T-cell (primary cell): ENCODE measurements at regions of chr9 and their contacts with region 1.

Region 1: DNA sequence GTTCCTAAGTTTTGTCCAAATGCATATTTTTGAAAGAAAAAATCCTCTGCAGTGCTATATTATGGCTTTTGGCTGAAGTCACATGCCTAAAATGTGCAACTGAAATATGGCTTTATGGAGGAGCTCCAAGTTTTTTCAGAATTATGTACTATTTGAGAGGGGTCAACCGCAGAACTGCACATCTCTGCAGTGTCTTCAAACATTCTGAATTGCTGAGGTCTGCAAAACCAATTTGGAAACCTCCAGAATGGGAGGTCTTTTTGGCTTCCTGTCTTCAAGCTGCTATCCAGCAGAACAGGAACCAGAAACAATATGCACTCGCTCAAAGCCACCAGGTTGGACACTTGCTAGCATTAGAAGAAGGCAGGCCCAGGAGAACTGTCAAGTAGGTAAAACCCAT is 376.0 kb upstream of the PAPPA start:
- DNase-seq: no peak
- ATAC-seq: no peak
- H3K4me3 ChIP-seq: no peak overlapping the region
- H3K4me3 Mint-ChIP-seq: no peak overlapping the region
- H3K27ac ChIP-seq: no peak overlapping the region
- H3K27ac Mint-ChIP-seq: no peak overlapping the region
- H3K4me1 ChIP-seq: no peaks in the 10 kb centered on the region
- H3K4me1 Mint-ChIP-seq: no peaks in the 10 kb centered on the region
- H3K27me3 ChIP-seq: no peaks in the 10 kb centered on the region
- H3K27me3 Mint-ChIP-seq: no peaks in the 10 kb centered on the region

Region 2: DNA sequence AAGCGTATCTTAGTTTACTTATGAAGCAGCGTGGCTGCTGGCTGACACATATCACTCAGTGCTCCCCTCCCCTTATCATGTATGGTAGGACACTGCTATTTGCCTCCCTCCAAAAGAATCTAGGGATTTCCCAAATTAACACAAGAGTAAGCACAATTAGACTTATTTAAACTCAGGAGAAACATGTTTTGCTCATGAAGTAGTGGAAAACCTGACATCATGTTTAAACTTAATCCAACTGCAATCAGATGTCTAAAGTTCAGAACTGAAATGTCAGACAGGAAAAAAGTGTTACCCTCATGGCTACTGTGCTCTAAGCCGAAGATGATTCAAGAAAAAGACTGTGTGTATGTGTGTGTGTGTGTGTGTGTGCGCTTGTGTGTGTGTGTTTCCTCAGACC is 335.6 kb before region 1 on chr9:
- CTCF ChIA-PET with region 1: no interaction called
- POLR2A ChIA-PET with region 1: interaction called in 1 of 2 experiments, 11 read pairs
- DNase-seq: no peak
- ATAC-seq: no peak
- H3K4me3 ChIP-seq: no peak overlapping the region
- H3K4me3 Mint-ChIP-seq: no peak overlapping the region
- H3K27ac ChIP-seq: no peak overlapping the region
- H3K27ac Mint-ChIP-seq: no peak overlapping the region
- H3K4me1 ChIP-seq: no peaks in the 10 kb centered on the region
- H3K4me1 Mint-ChIP-seq: no peaks in the 10 kb centered on the region
- H3K27me3 ChIP-seq: no peaks in the 10 kb centered on the region
- H3K27me3 Mint-ChIP-seq: peaks cover 0 to 9% of the 10 kb centered on the region in 2 donors

Region 3: DNA sequence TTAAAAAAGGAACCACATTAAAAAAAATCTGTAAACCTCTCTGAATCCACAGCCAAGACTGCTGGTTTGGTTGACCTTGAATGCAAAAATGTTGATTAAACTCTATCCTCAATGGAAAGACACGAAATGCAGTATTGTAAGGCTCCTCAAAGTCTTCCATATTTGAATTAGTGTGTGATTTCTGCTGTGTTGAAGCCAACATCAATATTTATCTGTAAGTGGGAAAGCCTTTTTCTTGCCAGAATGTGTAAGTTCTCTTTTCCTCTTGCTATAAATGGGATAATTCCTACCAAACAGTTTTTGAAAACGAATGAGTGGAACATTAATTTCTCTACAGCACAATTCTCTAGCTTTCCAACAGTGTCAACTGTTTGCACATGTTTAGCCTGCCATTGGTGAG is 237.5 kb before region 1 on chr9:
- CTCF ChIA-PET with region 1: no interaction called
- POLR2A ChIA-PET with region 1: no interaction called
- DNase-seq: no peak
- ATAC-seq: no peak
- H3K4me3 ChIP-seq: no peak overlapping the region
- H3K4me3 Mint-ChIP-seq: no peak overlapping the region
- H3K27ac ChIP-seq: no peak overlapping the region
- H3K27ac Mint-ChIP-seq: no peak overlapping the region
- H3K4me1 ChIP-seq: no peaks in the 10 kb centered on the region
- H3K4me1 Mint-ChIP-seq: no peaks in the 10 kb centered on the region
- H3K27me3 ChIP-seq: no peaks in the 10 kb centered on the region
- H3K27me3 Mint-ChIP-seq: peaks cover 7 to 8% of the 10 kb centered on the region in 2 donors